ENCODE measurements at regions of chr17 and their contacts with region 1.

Region 1: GRCh38 chr17:74748529-74749365 is at the start of gene NHERF1:
- DNase-seq: peak; percentile 91 to 95 (median 93)
- H3K4me3 ChIP-seq: peak within 1 kb of the TSS; percentile 95
- H3K4me3 Mint-ChIP-seq: peak within 1 kb of the TSS; percentile 95 to 100 (median 98)
- H3K27ac ChIP-seq: peak within 1 kb of the TSS; percentile 76
- H3K27ac Mint-ChIP-seq: peak within 1 kb of the TSS; percentile 84 to 96 (median 93)
- H3K4me1 ChIP-seq: peaks cover 72% of the 10 kb centered on the region
- H3K4me1 Mint-ChIP-seq: peaks cover 58 to 71% (median 65%) of the 10 kb centered on the region in 3 donors
- H3K27me3 ChIP-seq: no peaks in the 10 kb centered on the region
- H3K27me3 Mint-ChIP-seq: no peaks in the 10 kb centered on the region
- total RNA-seq, gene NHERF1: 131 to 133 TPM

Region 2: DNA sequence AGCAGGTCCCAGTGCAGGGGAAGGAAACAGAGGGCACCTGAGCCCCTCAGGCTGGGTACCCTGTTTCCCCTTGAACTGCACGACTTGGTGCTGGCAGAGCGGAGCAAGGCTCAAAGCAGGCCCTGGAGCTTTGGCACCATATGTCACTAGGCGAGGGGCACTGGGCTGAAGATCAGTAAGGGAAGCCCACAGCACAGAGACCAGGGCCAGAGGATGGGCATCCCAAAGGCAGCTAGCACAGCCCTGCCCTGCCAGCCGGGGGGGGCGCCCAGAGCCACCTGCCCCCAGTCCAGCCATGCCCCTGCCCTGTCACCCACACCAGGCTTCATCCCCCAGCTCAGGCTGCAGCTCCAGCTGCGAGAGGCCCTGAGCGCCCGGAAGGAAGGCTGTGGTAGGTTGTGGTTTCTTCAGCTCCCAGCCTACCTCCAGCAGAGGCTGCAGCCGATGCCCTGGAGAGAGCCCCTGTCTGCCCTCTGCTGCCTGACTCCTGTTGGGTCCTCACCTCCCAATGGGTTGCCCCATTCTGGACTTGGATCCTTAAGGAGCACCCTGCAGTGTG is 10.6 kb after region 1 on chr17:
- CTCF ChIA-PET with region 1: interaction called, 99 read pairs
- POLR2A ChIA-PET with region 1: interaction called, 38 read pairs
- DNase-seq: peak; percentile 46 to 77 (median 59)
- H3K4me3 ChIP-seq: peak overlapping the region; percentile 57
- H3K4me3 Mint-ChIP-seq: peak overlapping the region; percentile 55 to 90 (median 85)
- H3K27ac ChIP-seq: no peak overlapping the region
- H3K27ac Mint-ChIP-seq: peak overlapping the region; percentile 81 to 96 (median 90)
- H3K4me1 ChIP-seq: peaks cover 91% of the 10 kb centered on the region
- H3K4me1 Mint-ChIP-seq: peaks cover 73 to 87% (median 73%) of the 10 kb centered on the region in 3 donors
- H3K27me3 ChIP-seq: no peaks in the 10 kb centered on the region
- H3K27me3 Mint-ChIP-seq: no peaks in the 10 kb centered on the region

Region 3: GRCh38 chr17:74770498-74771318 is 22.0 kb after region 1 on chr17:
- CTCF ChIA-PET with region 1: interaction called, 214 read pairs
- POLR2A ChIA-PET with region 1: interaction called, 22 read pairs
- DNase-seq: peak; percentile 65 to 86 (median 73)
- H3K4me3 ChIP-seq: no peak overlapping the region
- H3K4me3 Mint-ChIP-seq: peak overlapping the region in 2 of 7 donors; percentile 36 to 83
- H3K27ac ChIP-seq: no peak overlapping the region
- H3K27ac Mint-ChIP-seq: peak overlapping the region; percentile 65 to 99 (median 82)
- H3K4me1 ChIP-seq: peaks cover 27% of the 10 kb centered on the region
- H3K4me1 Mint-ChIP-seq: peaks cover 38 to 61% (median 54%) of the 10 kb centered on the region in 3 donors
- H3K27me3 ChIP-seq: no peaks in the 10 kb centered on the region
- H3K27me3 Mint-ChIP-seq: peaks cover 0 to 2% of the 10 kb centered on the region in 2 donors

Region 4: DNA sequence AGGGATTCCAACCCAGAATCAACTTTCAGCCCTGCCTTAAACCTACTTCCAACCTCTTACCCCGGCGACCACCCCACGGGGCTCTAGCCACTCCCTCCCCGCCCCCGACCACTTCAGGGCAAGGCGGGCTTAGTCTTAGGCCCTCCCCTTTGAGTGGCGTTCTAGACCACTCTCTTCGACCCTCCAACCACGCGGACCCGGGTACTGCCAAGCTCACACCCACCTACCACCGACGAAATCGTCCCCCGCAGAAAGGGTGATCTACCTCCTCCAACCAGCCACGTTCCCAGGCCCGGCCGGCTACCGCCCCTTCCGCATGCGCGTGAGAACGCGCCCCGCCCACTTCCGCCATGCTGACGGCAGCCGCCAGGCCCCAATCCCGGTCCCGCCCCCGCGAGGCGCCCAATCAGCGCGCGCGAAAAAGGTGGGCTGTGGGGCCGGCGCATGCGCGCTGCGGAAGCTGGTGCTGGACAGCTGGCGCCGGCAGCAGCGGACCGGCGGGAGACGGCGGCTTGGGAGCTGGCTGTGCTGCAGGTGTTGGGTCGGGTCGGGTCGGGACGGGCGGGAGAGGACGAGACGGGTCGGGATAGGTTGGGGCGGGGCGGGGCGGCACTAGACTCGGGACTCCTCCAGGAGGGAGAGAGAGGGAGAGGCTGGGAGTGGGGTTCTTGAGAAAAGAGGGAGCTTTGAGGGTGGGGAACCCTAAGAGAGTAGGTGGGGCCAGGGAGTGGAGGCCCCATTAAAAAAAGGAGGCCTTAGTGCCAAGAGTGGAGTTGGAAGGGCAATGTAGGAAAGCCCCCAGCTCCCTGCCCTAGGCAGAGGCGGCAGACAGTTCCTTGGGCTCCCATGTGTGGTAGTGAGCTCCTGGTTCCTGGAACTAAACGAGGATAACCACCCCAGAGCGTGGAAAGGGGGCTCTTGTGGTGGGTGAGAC is 27.6 kb after region 1 on chr17 and contains the start of gene NAT9:
- CTCF ChIA-PET with region 1: interaction called, 214 read pairs
- POLR2A ChIA-PET with region 1: interaction called, 22 read pairs
- DNase-seq: peak; percentile 97 to 99 (median 99)
- H3K4me3 ChIP-seq: peak within 1 kb of the TSS; percentile 91
- H3K4me3 Mint-ChIP-seq: peak within 1 kb of the TSS; percentile 97 to 99 (median 98)
- H3K27ac ChIP-seq: peak within 1 kb of the TSS; percentile 73
- H3K27ac Mint-ChIP-seq: peak within 1 kb of the TSS; percentile 93 to 98 (median 98)
- H3K4me1 ChIP-seq: peaks cover 59% of the 10 kb centered on the region
- H3K4me1 Mint-ChIP-seq: peaks cover 60 to 83% (median 80%) of the 10 kb centered on the region in 3 donors
- H3K27me3 ChIP-seq: no peaks in the 10 kb centered on the region
- H3K27me3 Mint-ChIP-seq: no peaks in the 10 kb centered on the region
- total RNA-seq, gene NAT9: 42.7 to 44.5 TPM

Region 5: DNA sequence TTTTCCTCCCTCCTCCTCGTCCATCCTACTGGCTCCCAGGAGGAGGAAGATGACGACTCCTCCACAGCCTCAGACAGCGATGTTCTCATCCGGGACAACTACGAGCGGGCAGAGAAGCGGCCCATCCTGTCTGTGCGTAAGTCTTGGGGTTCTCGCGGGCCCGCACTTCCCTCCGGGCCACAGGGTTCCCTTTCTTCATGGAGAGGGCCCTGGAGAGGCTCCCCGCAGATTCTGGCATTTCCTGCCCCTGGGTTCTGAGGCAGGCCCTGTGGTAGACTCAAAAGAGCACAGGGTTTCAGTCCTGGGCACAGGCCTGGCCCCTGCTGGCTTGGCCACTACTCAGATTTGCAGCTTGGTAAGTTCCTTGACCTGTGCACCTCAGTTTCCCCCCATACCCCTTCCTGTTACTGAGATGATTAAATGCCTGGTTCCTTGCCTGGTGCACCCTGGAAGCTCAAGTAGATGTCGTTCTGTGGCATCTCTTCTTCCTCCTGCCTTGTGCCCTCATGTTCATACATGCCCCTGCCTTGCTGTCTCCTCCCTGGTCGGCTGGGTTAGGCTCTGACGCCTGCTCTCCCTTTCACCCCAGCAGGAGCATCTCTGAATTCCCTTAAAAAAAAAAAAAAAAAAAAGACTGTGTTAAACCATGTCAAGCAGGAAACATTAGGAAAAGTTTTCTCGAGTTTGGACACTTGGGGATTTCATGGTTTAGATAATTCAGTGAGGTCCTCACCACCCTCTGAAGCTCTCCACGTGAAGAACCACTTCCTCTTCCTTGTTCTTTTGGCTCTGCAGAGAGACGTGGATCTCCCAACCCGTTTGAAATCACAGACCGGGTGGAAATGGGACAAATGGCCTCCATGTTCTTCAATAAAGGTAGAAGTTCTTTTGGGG is 41.7 kb after region 1 on chr17:
- CTCF ChIA-PET with region 1: interaction called, 19 read pairs
- POLR2A ChIA-PET with region 1: interaction called, 4 read pairs
- DNase-seq: no peak
- H3K4me3 ChIP-seq: peak overlapping the region; percentile 8
- H3K4me3 Mint-ChIP-seq: peak overlapping the region in 1 of 7 donors; percentile 15
- H3K27ac ChIP-seq: no peak overlapping the region
- H3K27ac Mint-ChIP-seq: peak overlapping the region in 4 of 8 donors; percentile 4 to 52 (median 13)
- H3K4me1 ChIP-seq: peaks cover 37% of the 10 kb centered on the region
- H3K4me1 Mint-ChIP-seq: peaks cover 18 to 26% (median 18%) of the 10 kb centered on the region in 3 donors
- H3K27me3 ChIP-seq: no peaks in the 10 kb centered on the region
- H3K27me3 Mint-ChIP-seq: no peaks in the 10 kb centered on the region

Region 6: GRCh38 chr17:74842599-74843351 is 94.0 kb after region 1 on chr17:
- CTCF ChIA-PET with region 1: no interaction called
- POLR2A ChIA-PET with region 1: no interaction called
- DNase-seq: no peak
- H3K4me3 ChIP-seq: no peak overlapping the region
- H3K4me3 Mint-ChIP-seq: no peak overlapping the region
- H3K27ac ChIP-seq: no peak overlapping the region
- H3K27ac Mint-ChIP-seq: no peak overlapping the region
- H3K4me1 ChIP-seq: no peaks in the 10 kb centered on the region
- H3K4me1 Mint-ChIP-seq: peaks cover 10 to 22% (median 15%) of the 10 kb centered on the region in 3 donors
- H3K27me3 ChIP-seq: no peaks in the 10 kb centered on the region
- H3K27me3 Mint-ChIP-seq: peaks cover 2 to 10% of the 10 kb centered on the region in 2 donors

Region 7: DNA sequence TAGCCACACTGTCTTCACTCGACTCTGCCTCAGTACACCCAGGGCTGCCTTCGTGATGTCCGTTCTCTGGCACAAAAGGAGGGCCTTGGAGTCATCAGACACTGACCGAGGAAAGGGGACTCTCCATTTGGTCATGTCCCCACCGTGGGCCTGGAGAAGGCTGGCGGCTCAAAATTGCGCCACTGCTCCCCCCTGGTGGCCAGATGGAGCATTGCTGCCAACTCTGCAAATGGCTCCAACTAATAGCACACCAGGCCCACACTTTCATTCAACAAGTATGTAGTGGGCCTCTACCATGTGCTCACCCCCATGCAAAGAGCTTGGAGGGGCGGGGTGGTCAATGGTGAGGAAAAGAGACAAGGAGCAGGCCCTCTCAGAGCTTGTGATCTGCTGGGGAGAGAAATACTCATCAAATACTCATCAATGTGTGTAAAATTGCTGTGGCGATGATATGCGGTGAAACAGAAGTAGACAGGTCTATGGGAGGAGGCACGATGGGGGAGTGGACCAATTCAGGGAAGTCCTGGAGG is 116.2 kb after region 1 on chr17:
- CTCF ChIA-PET with region 1: interaction called, 16 read pairs
- POLR2A ChIA-PET with region 1: interaction called, 4 read pairs
- DNase-seq: peak; percentile 50 to 75 (median 63)
- H3K4me3 ChIP-seq: no peak overlapping the region
- H3K4me3 Mint-ChIP-seq: no peak overlapping the region
- H3K27ac ChIP-seq: no peak overlapping the region
- H3K27ac Mint-ChIP-seq: peak overlapping the region in 3 of 8 donors; percentile 42 to 67 (median 44)
- H3K4me1 ChIP-seq: peaks cover 17% of the 10 kb centered on the region
- H3K4me1 Mint-ChIP-seq: peaks cover 10 to 22% (median 12%) of the 10 kb centered on the region in 3 donors
- H3K27me3 ChIP-seq: peaks cover 14% of the 10 kb centered on the region
- H3K27me3 Mint-ChIP-seq: peaks cover 10 to 14% of the 10 kb centered on the region in 2 donors

Region 8: DNA sequence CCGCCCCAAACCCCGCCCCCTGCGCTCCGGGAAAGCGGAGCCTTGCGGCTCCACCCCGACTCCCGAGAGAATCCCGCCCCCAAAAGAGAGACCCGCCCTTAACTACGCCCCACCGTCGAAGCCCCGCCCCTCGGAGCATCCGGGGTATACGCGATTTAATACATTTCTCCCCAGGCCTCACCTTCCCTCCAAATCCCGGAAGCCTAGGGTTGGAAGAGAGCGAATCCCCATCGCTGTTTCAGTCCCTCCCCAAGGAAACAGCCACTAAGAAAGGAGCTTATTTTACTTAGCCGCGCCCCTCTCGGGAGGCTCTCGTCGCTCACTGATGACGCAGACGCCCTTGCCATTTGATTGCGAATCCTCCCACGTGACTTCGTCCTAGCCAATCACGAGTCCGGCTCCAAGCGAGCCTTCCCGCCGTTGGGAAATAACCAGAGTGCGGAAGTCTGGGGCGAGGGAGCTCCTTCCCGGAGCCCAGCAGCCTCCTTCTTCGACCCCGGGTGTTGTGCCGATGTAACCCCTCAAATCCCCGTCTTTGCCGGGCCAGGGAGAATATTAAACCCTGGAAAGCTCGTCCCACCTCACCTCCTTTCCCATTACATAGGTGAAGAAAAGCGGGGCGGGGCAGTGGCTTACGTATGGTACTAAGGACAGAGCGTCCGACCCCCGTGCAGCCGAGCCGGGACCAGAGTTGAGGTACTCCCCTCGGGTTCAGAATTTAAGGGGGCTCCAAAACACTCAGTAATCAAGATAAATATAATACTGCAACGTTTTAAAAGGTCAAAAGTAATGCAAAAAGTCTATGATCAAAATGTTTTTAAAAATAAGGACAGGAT is 124.5 kb after region 1 on chr17:
- CTCF ChIA-PET with region 1: interaction called, 6 read pairs
- POLR2A ChIA-PET with region 1: interaction called, 10 read pairs
- DNase-seq: peak; percentile 98 to 100 (median 99)
- H3K4me3 ChIP-seq: peak overlapping the region; percentile 98
- H3K4me3 Mint-ChIP-seq: peak overlapping the region; percentile 82 to 97 (median 93)
- H3K27ac ChIP-seq: peak overlapping the region; percentile 96
- H3K27ac Mint-ChIP-seq: peak overlapping the region; percentile 91 to 99 (median 97)
- H3K4me1 ChIP-seq: peaks cover 10% of the 10 kb centered on the region
- H3K4me1 Mint-ChIP-seq: peaks cover 18 to 23% (median 22%) of the 10 kb centered on the region in 3 donors
- H3K27me3 ChIP-seq: no peaks in the 10 kb centered on the region
- H3K27me3 Mint-ChIP-seq: no peaks in the 10 kb centered on the region

Measured in CD8-positive, alpha-beta memory T cell (primary cell).